ENCODE measurements at regions of chr1 and their contacts with region 1.

Region 1: GRCh38 chr1:110209715-110210603 is at the start of gene KCNC4:
- DNase-seq: peak; percentile 83
- H3K4me3 ChIP-seq: peak within 1 kb of the TSS; percentile 55 to 64
- H3K27ac ChIP-seq: peak within 1 kb of the TSS; percentile 74 to 75
- H3K4me1 ChIP-seq: no peaks in the 10 kb centered on the region
- H3K27me3 ChIP-seq: no peaks in the 10 kb centered on the region
- CTCF ChIP-seq: peak in 1 of 4 experiments; percentile 6
- POLR2A ChIP-seq: peak; percentile 55
- total RNA-seq, gene KCNC4: 4.7 to 23.9 TPM

Region 2: DNA sequence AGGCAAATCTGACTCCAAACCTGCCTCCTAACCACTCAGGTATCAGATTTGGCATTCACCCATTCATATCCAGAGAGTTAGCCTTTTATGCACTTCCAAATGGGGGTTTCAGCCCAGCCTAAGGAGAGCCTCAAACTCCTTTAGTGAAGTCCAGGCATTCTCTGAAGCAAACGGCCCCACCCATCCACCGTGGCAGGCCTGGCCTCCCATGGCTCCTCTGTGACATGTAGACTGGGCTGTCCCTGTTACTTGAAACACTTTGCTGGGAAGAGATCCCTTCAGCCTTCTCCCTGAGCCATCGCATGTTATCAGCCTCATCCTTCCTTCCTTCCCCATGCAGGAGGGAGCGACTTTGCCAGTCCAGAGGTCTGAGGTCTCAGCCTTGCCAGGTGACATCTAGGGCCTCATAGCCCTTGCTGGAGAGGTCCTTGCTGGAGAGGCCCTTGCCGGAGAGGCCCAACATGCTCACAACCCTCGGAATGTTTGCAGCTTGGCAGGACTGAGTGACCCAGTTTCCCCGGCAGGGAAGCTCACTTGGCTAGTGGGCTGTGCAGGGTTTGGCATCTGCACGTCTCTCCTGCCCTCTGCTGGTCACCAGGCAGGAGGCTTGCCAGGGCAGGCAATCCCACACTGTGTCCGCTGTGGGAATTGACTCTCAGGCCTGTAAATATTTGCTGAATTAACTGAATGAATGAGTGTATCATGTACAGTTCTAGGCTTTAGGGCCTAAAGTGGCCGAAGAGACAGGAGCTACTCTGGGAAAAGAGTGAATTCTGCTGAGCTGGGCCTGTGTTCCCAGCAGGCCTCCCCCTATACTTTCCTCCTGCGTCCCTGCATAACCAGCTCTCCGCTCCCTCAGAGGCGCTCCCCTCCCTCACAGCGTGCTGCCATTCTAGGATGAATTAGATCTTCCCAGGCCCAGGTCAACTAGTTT is 102.5 kb after region 1 on chr1:
- intact Hi-C with region 1: loop called (anchors 1 kb)
- DNase-seq: peak; percentile 75
- H3K4me3 ChIP-seq: no peak overlapping the region
- H3K27ac ChIP-seq: no peak overlapping the region
- H3K4me1 ChIP-seq: no peaks in the 10 kb centered on the region
- H3K27me3 ChIP-seq: no peaks in the 10 kb centered on the region
- CTCF ChIP-seq: peak; percentile 88 to 98 (median 94)
- POLR2A ChIP-seq: no peak

Region 3: GRCh38 chr1:110407260-110408210 is 197.6 kb after region 1 on chr1 and contains the start of gene LAMTOR5:
- intact Hi-C with region 1: loop called (anchors 2 kb)
- DNase-seq: peak; percentile 91
- H3K4me3 ChIP-seq: peak within 1 kb of the TSS; percentile 81 to 93
- H3K27ac ChIP-seq: peak within 1 kb of the TSS; percentile 90 to 92
- H3K4me1 ChIP-seq: peaks cover 7% of the 10 kb centered on the region
- H3K27me3 ChIP-seq: no peaks in the 10 kb centered on the region
- CTCF ChIP-seq: peak in 2 of 4 experiments; percentile 20 to 39
- POLR2A ChIP-seq: peak; percentile 82
- total RNA-seq, gene LAMTOR5: 86.6 to 132 TPM

Region 4: GRCh38 chr1:110452330-110452729 is 242.4 kb after region 1 on chr1:
- intact Hi-C with region 1: loop called (anchors 2 kb)
- DNase-seq: no peak
- H3K4me3 ChIP-seq: no peak overlapping the region
- H3K27ac ChIP-seq: no peak overlapping the region
- H3K4me1 ChIP-seq: no peaks in the 10 kb centered on the region
- H3K27me3 ChIP-seq: no peaks in the 10 kb centered on the region
- CTCF ChIP-seq: no peak
- POLR2A ChIP-seq: no peak

Measured in prostate gland (tissue), 2 donors.